CD14-positive monocyte (primary cell): ENCODE measurements at regions of chr2 and their contacts with region 1.

Region 1: DNA sequence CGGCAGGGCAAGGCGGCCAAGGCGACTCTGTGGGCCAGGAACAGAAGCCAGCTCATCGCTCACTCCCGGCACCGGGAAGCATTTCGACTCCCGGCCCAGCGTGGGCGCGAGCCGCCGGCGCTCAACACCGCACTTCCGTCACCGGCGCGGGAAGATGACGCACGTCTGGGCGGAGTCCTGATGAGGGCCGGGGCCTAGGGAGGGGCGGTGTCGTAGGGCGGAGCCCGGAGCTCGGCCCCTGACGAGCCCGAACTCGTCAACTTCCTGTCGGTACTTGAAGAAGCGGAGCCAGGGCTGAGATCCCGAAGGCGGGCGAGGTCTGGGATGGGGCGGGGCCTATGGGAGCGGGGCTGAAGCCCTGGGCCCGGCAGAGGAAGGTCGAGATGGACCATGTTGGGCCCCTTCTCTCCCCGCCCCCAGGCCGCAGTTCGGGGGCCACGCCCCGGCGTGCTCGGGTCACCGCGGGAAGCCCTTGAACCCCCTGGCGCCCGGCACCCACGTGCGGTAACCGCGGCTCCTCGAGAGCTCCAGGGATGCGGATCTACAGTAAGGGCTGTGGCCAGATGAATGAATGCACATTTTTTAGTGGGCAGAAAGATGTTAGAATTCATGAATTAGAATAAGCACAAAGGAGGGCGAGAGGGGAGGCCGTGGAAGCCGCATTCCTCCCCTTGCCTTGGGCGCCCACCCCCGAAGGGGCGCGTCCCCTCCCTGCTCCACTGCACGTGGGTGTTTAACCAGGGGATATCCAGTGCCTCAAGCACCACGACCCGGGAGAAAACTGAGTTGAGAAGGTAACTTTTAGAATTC is at the start of gene RNASEH1:
- DNase-seq: peak; percentile 98 to 99 (median 99)
- H3K4me3 ChIP-seq: peak within 1 kb of the TSS; percentile 82 to 92 (median 85)
- H3K4me3 Mint-ChIP-seq: peak within 1 kb of the TSS; percentile 85 to 90
- H3K27ac ChIP-seq: peak within 1 kb of the TSS; percentile 82 to 87
- H3K27ac Mint-ChIP-seq: peak within 1 kb of the TSS; percentile 86 to 96 (median 92)
- H3K4me1 ChIP-seq: peaks cover 18 to 24% of the 10 kb centered on the region in 2 donors
- H3K4me1 Mint-ChIP-seq: peaks cover 22% of the 10 kb centered on the region
- H3K27me3 ChIP-seq: no peaks in the 10 kb centered on the region
- H3K27me3 Mint-ChIP-seq: no peaks in the 10 kb centered on the region
- CTCF ChIP-seq: no peak
- polyA plus RNA-seq, gene RNASEH1: 6.8 to 16.4 (median 14.2) TPM

Region 2: GRCh38 chr2:3493615-3494007 is 64.8 kb before region 1 on chr2:
- intact Hi-C with region 1: no loop called
- DNase-seq: no peak
- H3K4me3 ChIP-seq: no peak overlapping the region
- H3K4me3 Mint-ChIP-seq: no peak overlapping the region
- H3K27ac ChIP-seq: no peak overlapping the region
- H3K27ac Mint-ChIP-seq: peak overlapping the region in 2 of 7 donors; percentile 7 to 77
- H3K4me1 ChIP-seq: no peaks in the 10 kb centered on the region
- H3K4me1 Mint-ChIP-seq: peaks cover 1% of the 10 kb centered on the region
- H3K27me3 ChIP-seq: no peaks in the 10 kb centered on the region
- H3K27me3 Mint-ChIP-seq: peaks cover 0 to 1% (median 0%) of the 10 kb centered on the region in 3 donors
- CTCF ChIP-seq: no peak

Region 3: GRCh38 chr2:3518496-3519254 is 39.7 kb before region 1 on chr2:
- intact Hi-C with region 1: loop called (anchors 5 kb)
- DNase-seq: peak; percentile 93 to 95 (median 95)
- H3K4me3 ChIP-seq: peak overlapping the region; percentile 81 to 94 (median 88)
- H3K4me3 Mint-ChIP-seq: peak overlapping the region; percentile 88 to 93
- H3K27ac ChIP-seq: peak overlapping the region; percentile 74 to 87
- H3K27ac Mint-ChIP-seq: peak overlapping the region; percentile 65 to 88 (median 84)
- H3K4me1 ChIP-seq: peaks cover 18 to 30% of the 10 kb centered on the region in 2 donors
- H3K4me1 Mint-ChIP-seq: peaks cover 30% of the 10 kb centered on the region
- H3K27me3 ChIP-seq: no peaks in the 10 kb centered on the region
- H3K27me3 Mint-ChIP-seq: peaks cover 0 to 1% (median 0%) of the 10 kb centered on the region in 3 donors
- CTCF ChIP-seq: no peak

Region 4: DNA sequence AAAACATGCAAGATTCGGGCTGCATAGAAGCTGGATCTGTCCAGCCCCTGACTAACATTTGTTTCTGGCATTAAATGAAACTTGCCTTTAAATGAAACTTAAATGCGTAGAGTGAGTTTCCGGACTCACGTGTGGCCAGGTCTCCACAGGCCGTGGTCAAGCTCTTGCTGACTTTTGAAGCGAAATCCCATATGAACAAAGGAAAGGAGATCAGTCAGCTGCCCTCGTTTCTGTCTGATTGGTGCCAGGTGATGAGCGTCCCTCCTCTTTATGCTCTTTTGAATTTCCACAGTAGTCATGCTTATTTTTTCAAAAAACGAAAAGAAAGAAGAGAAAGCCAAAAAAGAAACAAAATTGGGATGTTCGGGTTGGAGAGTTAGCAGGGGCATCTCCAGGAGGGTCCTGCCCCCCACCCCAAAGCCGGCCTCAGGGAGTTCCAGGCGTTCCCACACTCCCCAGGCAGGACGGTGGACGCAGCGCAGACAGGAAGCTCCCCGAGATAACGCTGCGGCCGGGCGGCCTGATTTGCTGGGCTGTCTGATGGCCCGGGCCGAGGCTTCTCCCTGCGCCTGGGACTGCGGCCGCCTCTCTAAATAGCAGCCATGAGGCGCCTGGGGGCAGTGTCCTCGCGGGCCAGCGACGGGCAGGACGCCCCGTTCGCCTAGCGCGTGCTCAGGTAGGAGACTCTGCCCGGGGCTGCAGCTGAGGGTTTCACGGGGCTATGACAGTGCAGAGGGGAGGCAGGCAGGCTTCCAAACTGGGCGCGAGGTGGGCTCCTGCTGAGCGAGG is 36.3 kb after region 1 on chr2 and contains the start of gene COLEC11:
- intact Hi-C with region 1: no loop called
- DNase-seq: no peak
- H3K4me3 ChIP-seq: no peak within 1 kb of the TSS
- H3K4me3 Mint-ChIP-seq: peak within 1 kb of the TSS in 1 of 2 donors; percentile 37
- H3K27ac ChIP-seq: no peak within 1 kb of the TSS
- H3K27ac Mint-ChIP-seq: no peak within 1 kb of the TSS
- H3K4me1 ChIP-seq: peaks cover 0 to 4% of the 10 kb centered on the region in 2 donors
- H3K4me1 Mint-ChIP-seq: peaks cover 7% of the 10 kb centered on the region
- H3K27me3 ChIP-seq: peaks cover 0 to 12% of the 10 kb centered on the region in 2 donors
- H3K27me3 Mint-ChIP-seq: peaks cover 13 to 25% (median 15%) of the 10 kb centered on the region in 3 donors
- CTCF ChIP-seq: no peak
- polyA plus RNA-seq, gene COLEC11: not detected